PC-9 (cell line): ENCODE measurements at regions of chr3 and their contacts with region 1.

Region 1: DNA sequence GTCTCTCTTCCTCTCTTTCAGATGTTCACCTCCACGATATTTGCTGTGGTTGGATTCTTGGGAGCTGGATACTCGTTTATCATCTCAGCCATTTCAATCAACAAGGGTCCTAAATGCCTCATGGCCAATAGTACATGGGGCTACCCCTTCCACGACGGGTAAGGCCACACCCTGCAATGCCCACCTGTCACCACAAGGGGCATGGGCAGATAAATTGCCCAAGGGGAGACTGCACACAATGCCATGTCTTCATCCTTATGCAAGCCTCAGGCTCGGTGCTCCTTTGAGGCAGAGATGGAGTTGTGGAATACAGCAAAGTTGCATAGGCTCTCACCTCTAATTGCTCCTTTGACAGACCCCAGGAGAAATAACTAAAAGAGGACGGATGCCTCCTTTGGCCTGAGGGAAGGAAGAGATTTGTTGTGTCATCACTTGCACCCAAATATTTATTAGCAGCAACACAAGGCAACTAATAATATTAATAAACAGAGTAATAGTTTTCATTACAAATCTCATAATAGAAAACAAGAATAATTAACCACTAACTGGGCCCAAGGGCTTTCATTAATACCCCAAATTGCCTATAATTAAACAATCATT is 13.2 kb downstream of the TM4SF4 start:
- DNase-seq: no peak
- H3K4me3 ChIP-seq: no peak overlapping the region
- H3K27ac ChIP-seq: no peak overlapping the region
- H3K4me1 ChIP-seq: no peaks in the 10 kb centered on the region
- H3K27me3 ChIP-seq: no peaks in the 10 kb centered on the region
- CTCF ChIP-seq: no peak; the same call in none of the 2 replicates

Region 2: DNA sequence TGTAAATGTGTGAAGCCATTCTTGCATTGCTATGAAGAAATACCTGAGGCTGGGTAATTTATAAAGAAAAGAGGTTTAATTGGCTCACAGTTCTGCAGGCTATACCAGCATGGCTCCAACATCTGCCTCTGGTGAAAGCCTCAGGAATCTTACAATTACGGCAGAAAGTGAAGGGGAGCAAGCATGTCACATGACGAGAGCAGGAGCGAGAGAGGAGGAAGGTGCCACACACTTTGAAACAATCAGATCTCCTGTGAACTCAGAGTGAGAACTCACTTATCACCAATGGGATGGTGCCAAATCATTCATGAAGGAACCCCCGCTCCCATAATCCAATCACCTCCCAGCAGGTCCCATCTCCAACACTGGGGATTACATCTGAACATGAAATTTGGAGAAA is 706.8 kb after region 1 on chr3:
- CTCF ChIA-PET with region 1: interaction called, 12 read pairs
- POLR2A ChIA-PET with region 1: no interaction called
- intact Hi-C with region 1: no loop called
- DNase-seq: no peak
- H3K4me3 ChIP-seq: no peak overlapping the region
- H3K27ac ChIP-seq: no peak overlapping the region
- H3K4me1 ChIP-seq: no peaks in the 10 kb centered on the region
- H3K27me3 ChIP-seq: no peaks in the 10 kb centered on the region
- CTCF ChIP-seq: no peak